ENCODE measurements at regions of chr4 and their contacts with region 1.

Region 1: DNA sequence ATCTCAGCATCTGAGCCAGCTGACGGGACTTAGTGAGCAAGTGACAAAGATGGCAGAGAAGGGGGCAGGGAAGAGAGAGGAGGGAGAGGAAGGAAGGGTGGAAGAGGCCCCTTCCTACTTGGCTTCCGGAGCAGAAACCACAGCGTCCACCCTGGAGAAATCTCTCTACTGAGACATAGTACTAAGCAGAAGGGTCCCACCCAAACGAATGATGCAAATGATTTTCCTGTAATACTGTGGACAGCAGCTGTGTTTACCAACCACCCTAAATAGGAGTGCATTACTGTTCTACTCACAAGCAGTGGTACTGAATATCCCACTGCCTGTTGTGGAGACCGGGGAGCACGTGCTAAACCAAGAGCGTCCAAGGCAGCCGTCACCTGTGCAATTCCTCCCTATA is 29.4 kb downstream of the DTHD1 start:
- DNase-seq: peak in 3 of 35 experiments; percentile 8 to 29 (median 23)
- ATAC-seq: peak in 3 of 4 experiments; percentile 24 to 70 (median 32)
- H3K4me3 ChIP-seq: no peak overlapping the region
- H3K4me3 Mint-ChIP-seq: peak overlapping the region in 1 of 3 donors; percentile 1
- H3K27ac ChIP-seq: no peak overlapping the region
- H3K27ac Mint-ChIP-seq: no peak overlapping the region
- H3K4me1 ChIP-seq: peaks cover 8 to 13% of the 10 kb centered on the region in 2 experiments
- H3K4me1 Mint-ChIP-seq: peaks cover 13 to 29% (median 27%) of the 10 kb centered on the region in 3 donors
- H3K27me3 ChIP-seq: no peaks in the 10 kb centered on the region
- H3K27me3 Mint-ChIP-seq: no peaks in the 10 kb centered on the region

Region 2: DNA sequence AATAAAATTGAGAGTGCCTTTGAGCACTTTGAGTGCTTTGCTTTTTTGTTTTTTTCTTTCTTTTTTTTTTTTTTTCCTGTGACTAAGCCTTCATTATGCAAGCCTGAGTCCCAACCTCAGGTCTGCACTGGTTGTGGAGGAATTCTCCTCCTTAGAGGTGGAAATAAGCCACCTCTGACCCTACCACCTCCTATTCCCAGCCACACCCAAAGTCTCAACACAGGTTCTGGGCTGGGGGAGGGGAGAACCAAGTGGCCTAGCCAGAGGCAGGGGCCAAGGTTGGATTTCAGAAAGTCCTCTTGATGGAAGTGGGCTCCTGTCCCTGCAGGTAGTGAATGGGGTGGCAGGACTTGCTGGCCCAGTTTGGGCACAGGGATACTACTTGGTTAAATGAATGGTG is 246.6 kb before region 1 on chr4:
- CTCF ChIA-PET with region 1: no interaction called
- POLR2A ChIA-PET with region 1: no interaction called
- DNase-seq: no peak
- ATAC-seq: no peak
- H3K4me3 ChIP-seq: no peak overlapping the region
- H3K4me3 Mint-ChIP-seq: no peak overlapping the region
- H3K27ac ChIP-seq: no peak overlapping the region
- H3K27ac Mint-ChIP-seq: no peak overlapping the region
- H3K4me1 ChIP-seq: no peaks in the 10 kb centered on the region
- H3K4me1 Mint-ChIP-seq: peaks cover 0 to 6% (median 0%) of the 10 kb centered on the region in 3 donors
- H3K27me3 ChIP-seq: peaks cover 0 to 2% of the 10 kb centered on the region in 2 experiments
- H3K27me3 Mint-ChIP-seq: no peaks in the 10 kb centered on the region

Region 3: DNA sequence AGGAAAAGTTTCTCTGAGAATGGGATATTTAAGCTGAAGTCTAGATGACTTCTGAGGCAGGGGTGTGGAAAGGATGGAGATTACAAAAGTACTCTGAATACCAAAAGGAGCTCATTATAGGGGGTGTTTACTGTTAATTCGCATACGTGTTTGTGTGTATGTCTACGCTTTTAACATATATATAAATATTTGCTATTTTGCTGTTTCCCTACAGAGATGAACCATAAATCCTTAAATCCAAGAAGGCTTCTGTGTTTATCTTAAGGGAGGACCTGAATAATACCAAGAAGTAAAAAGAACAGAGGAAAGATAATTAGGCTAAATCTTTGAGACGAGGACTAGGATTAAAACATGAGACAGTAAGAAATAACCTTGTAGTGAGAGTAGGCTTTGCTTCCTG is 232.5 kb before region 1 on chr4:
- CTCF ChIA-PET with region 1: no interaction called
- POLR2A ChIA-PET with region 1: no interaction called
- DNase-seq: no peak
- ATAC-seq: no peak
- H3K4me3 ChIP-seq: no peak overlapping the region
- H3K4me3 Mint-ChIP-seq: no peak overlapping the region
- H3K27ac ChIP-seq: no peak overlapping the region
- H3K27ac Mint-ChIP-seq: no peak overlapping the region
- H3K4me1 ChIP-seq: no peaks in the 10 kb centered on the region
- H3K4me1 Mint-ChIP-seq: no peaks in the 10 kb centered on the region
- H3K27me3 ChIP-seq: no peaks in the 10 kb centered on the region
- H3K27me3 Mint-ChIP-seq: no peaks in the 10 kb centered on the region

Region 4: DNA sequence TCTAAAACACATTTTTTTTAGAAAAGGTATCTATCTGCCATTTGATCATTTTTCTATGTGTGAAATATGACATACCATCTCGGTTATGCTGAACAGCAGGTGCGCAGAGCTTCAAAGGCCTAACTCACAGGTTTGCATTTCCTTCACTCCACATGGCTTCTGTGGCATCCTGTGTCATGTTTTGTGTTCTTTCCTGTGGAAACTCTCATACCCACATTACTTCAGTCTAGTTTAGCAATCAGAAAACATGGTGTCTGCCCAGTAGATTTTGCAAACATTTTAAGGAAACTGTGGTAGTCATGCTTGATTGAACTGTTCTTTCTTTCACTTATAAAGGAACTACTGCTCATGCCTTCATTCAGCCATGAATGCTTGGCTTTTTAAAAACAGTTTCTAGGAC is 55.2 kb before region 1 on chr4:
- CTCF ChIA-PET with region 1: no interaction called
- POLR2A ChIA-PET with region 1: interaction called in 1 of 2 experiments, 16 read pairs
- DNase-seq: peak; percentile 24 to 90 (median 68)
- ATAC-seq: peak; percentile 96 to 99 (median 98)
- H3K4me3 ChIP-seq: no peak overlapping the region
- H3K4me3 Mint-ChIP-seq: peak overlapping the region; percentile 61 to 65 (median 64)
- H3K27ac ChIP-seq: peak overlapping the region; percentile 75
- H3K27ac Mint-ChIP-seq: peak overlapping the region; percentile 88 to 96
- H3K4me1 ChIP-seq: peaks cover 19 to 30% of the 10 kb centered on the region in 2 experiments
- H3K4me1 Mint-ChIP-seq: peaks cover 38 to 50% (median 42%) of the 10 kb centered on the region in 3 donors
- H3K27me3 ChIP-seq: no peaks in the 10 kb centered on the region
- H3K27me3 Mint-ChIP-seq: no peaks in the 10 kb centered on the region

Region 5: DNA sequence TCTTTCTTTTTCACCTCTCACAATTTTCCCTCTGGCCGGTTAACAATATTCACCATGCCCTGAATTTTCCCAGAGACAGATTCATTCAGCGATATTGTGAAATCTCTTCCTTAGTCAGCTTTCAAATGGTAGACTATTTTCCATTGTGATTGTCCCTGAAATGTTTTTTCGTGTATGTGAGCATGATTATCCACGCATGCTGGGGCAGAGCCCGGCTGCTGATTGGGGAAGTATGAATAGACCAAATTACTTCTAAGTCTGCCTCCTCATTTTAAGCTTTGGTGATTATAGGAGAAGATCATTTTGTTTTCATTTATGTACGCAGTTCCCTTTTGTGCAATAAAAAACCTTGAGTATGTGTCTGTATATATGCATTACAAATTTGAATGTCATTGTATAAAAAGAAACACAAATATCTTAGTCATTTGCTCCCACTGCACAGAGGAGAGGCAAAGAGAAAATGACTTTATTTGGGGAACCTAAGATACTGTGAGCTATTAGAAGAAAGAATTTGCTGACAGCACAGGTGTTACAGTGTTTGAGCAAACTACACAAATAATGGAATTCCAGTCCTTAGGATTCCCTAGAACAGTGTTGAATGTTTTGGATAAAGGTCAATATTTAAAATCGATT is 18.1 kb before region 1 on chr4:
- CTCF ChIA-PET with region 1: interaction called in 1 of 2 experiments, 3 read pairs
- POLR2A ChIA-PET with region 1: interaction called in 1 of 2 experiments, 12 read pairs
- DNase-seq: no peak
- ATAC-seq: no peak
- H3K4me3 ChIP-seq: no peak overlapping the region
- H3K4me3 Mint-ChIP-seq: no peak overlapping the region
- H3K27ac ChIP-seq: no peak overlapping the region
- H3K27ac Mint-ChIP-seq: no peak overlapping the region
- H3K4me1 ChIP-seq: peaks cover 0 to 4% of the 10 kb centered on the region in 2 experiments
- H3K4me1 Mint-ChIP-seq: peaks cover 0 to 17% (median 8%) of the 10 kb centered on the region in 3 donors
- H3K27me3 ChIP-seq: no peaks in the 10 kb centered on the region
- H3K27me3 Mint-ChIP-seq: no peaks in the 10 kb centered on the region

Region 6: GRCh38 chr4:36587909-36588472 is 277.2 kb after region 1 on chr4:
- CTCF ChIA-PET with region 1: no interaction called
- POLR2A ChIA-PET with region 1: interaction called in 1 of 2 experiments, 13 read pairs
- DNase-seq: no peak
- ATAC-seq: no peak
- H3K4me3 ChIP-seq: no peak overlapping the region
- H3K4me3 Mint-ChIP-seq: no peak overlapping the region
- H3K27ac ChIP-seq: no peak overlapping the region
- H3K27ac Mint-ChIP-seq: no peak overlapping the region
- H3K4me1 ChIP-seq: no peaks in the 10 kb centered on the region
- H3K4me1 Mint-ChIP-seq: no peaks in the 10 kb centered on the region
- H3K27me3 ChIP-seq: peaks cover 0 to 4% of the 10 kb centered on the region in 2 experiments
- H3K27me3 Mint-ChIP-seq: no peaks in the 10 kb centered on the region